A549 (cell line): ENCODE measurements at regions of chr14 and their contacts with region 1.

Region 1: DNA sequence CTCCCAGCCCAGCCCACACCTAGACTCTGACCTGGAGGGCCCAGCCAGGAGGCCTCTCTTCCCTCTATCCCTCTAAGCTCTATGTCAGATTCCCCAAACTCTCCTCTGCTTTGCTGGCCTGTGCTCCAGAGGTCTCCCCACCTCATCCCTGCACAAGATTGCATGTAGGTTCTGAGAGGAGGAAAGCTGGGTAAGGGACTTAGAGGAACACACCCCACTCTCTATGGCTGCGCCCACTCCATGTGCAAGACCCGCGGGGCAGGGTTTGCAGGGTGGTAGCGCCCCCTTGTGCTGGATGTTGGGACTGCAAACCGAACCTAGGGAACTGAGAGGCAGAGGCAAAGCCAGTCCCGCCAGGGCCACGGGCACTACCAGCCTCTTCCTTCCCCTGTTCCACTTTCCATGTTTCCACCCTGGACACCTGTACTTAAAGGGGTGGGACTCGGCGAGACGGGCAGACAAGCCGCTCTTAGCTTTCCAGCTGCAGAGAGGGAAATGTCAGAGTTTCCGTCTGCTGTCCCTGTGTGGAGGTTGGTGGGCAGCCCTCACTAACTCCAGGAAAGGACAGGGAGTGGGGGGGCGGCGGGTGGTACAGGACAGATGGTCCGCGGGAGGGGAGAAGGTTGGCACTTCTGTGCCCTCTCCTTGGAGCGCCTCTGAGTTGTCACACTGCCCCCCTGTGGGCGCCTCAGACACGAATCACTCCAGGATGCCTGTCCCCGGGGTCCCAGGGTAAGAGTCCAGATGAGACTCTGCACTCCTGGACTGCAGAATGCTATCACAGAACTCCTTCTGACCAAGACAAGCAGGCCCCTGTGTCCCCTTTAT is 16.8 kb downstream of the MMP14 start:
- DNase-seq: peak; percentile 70 to 82
- ATAC-seq: peak; percentile 91 to 96
- H3K4me3 ChIP-seq: peak overlapping the region; percentile 57
- H3K27ac ChIP-seq: peak overlapping the region; percentile 91 to 98
- H3K4me1 ChIP-seq: peaks cover 4% of the 10 kb centered on the region; the same call in 2 of the 3 replicates
- CTCF ChIP-seq: peak; percentile 92
- EP300 ChIP-seq: no peak
- POLR2A ChIP-seq: no peak
- RAD21 ChIP-seq: peak; percentile 91 to 97

Region 2: GRCh38 chr14:22646570-22647254 is 206.4 kb before region 1 on chr14:
- CTCF ChIA-PET with region 1: interaction called, 30 read pairs
- POLR2A ChIA-PET with region 1: no interaction called
- DNase-seq: peak in 1 of 2 experiments; percentile 27
- ATAC-seq: no peak
- H3K4me3 ChIP-seq: no peak overlapping the region
- H3K27ac ChIP-seq: peak overlapping the region; percentile 79 to 80
- H3K4me1 ChIP-seq: peaks cover 53% of the 10 kb centered on the region
- CTCF ChIP-seq: no peak
- EP300 ChIP-seq: no peak
- POLR2A ChIP-seq: no peak
- RAD21 ChIP-seq: no peak

Region 3: GRCh38 chr14:22748631-22749068 is 104.5 kb before region 1 on chr14:
- CTCF ChIA-PET with region 1: interaction called, 12 read pairs
- POLR2A ChIA-PET with region 1: no interaction called
- DNase-seq: no peak
- ATAC-seq: no peak
- H3K4me3 ChIP-seq: no peak overlapping the region
- H3K27ac ChIP-seq: no peak overlapping the region
- H3K4me1 ChIP-seq: no peaks in the 10 kb centered on the region
- CTCF ChIP-seq: no peak
- EP300 ChIP-seq: no peak
- POLR2A ChIP-seq: no peak
- RAD21 ChIP-seq: no peak

Region 4: GRCh38 chr14:22781586-22781991 is 71.6 kb before region 1 on chr14:
- CTCF ChIA-PET with region 1: interaction called, 71 read pairs
- POLR2A ChIA-PET with region 1: no interaction called
- DNase-seq: no peak
- ATAC-seq: no peak
- H3K4me3 ChIP-seq: no peak overlapping the region
- H3K27ac ChIP-seq: no peak overlapping the region
- H3K4me1 ChIP-seq: peaks cover 10% of the 10 kb centered on the region; the same call in 2 of the 3 replicates
- CTCF ChIP-seq: no peak
- EP300 ChIP-seq: no peak
- POLR2A ChIP-seq: no peak
- RAD21 ChIP-seq: no peak

Region 5: DNA sequence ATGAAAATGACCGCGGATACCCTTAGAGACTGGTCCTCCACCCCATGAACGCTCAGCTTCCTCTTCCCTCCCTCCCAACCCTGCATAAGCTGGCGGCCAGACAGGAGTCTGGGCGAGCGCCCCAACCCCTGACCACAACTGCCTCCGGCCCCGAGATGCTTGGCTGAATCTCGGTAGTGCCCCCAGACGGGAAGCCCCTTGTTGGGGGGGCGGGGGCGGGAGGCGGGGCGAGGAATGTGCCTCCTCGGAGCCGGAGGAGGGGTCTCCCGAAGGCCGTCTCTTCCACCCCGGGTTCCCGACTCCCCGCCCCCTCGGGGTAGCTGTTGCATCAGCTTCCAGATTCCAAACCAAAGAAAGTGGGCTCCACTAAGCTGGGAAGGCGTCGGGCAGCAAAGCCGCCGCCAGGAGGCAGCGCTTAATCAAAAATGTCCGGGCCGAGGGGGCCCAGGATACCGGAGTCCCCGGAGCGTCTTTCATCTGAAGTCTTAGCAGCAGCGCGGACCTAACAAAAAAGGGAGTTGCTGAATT is 30.5 kb before region 1 on chr14:
- CTCF ChIA-PET with region 1: interaction called, 259 read pairs
- POLR2A ChIA-PET with region 1: interaction called, 8 read pairs
- DNase-seq: peak; percentile 83 to 88
- ATAC-seq: peak; percentile 68 to 90
- H3K4me3 ChIP-seq: peak overlapping the region; percentile 33
- H3K27ac ChIP-seq: peak overlapping the region; percentile 82 to 93
- H3K4me1 ChIP-seq: peaks cover 74% of the 10 kb centered on the region
- CTCF ChIP-seq: peak; percentile 85
- EP300 ChIP-seq: no peak
- POLR2A ChIP-seq: no peak
- RAD21 ChIP-seq: peak; percentile 85 to 94

Region 6: GRCh38 chr14:22836301-22837113 is 16.6 kb before region 1 on chr14 and contains the start of gene MMP14:
- CTCF ChIA-PET with region 1: interaction called, 195 read pairs
- POLR2A ChIA-PET with region 1: no interaction called
- DNase-seq: no peak
- ATAC-seq: no peak
- H3K4me3 ChIP-seq: 0 out of 3 replicates have a peak within 1 kb of the TSS, but pooled peaks have one; percentile 18
- H3K27ac ChIP-seq: peak within 1 kb of the TSS in 1 of 2 experiments; percentile 38; a peak in 1 of 6 replicates
- H3K4me1 ChIP-seq: no peaks in the 10 kb centered on the region
- CTCF ChIP-seq: no peak
- EP300 ChIP-seq: no peak
- POLR2A ChIP-seq: no peak
- RAD21 ChIP-seq: no peak
- polyA plus RNA-seq, gene MMP14: 1.9 and 2.5 TPM in 2 replicates

Region 7: DNA sequence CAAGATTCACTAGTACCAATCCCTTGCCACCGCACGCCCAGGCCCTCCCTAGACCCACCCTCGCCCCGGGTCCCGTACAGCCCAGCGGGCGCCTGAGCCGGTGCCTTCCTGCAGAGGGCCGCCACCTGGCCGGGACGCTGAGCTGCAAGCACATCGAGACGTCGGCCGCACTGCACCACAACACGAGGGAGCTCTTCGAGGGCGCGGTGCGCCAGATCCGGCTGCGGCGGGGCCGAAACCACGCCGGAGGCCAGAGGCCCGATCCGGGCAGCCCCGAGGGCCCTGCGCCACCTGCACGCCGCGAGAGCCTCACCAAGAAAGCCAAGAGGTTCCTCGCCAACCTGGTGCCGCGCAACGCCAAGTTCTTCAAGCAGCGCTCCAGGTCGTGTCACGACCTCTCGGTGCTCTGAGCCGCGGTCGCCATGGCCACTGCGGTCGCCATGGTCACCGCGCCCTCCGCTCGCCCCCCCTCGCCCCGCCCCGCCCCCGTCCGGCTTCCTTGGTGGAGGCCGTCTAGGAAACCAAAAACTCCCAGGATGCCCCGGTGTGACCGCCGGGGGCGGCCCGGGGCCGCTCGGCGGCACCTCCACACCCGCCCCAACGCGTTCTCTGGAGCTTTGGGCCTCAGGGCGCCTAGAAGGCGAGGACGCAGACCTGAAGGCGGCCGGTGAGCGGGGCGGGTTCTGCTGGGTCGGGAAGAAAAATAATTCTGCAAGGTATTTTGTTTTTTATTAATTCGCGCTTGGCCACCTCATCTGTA is 33.5 kb after region 1 on chr14:
- CTCF ChIA-PET with region 1: interaction called, 30 read pairs
- POLR2A ChIA-PET with region 1: no interaction called
- DNase-seq: peak; percentile 66 to 73
- ATAC-seq: peak; percentile 78 to 80
- H3K4me3 ChIP-seq: peak overlapping the region; percentile 61
- H3K27ac ChIP-seq: peak overlapping the region; percentile 87 to 93
- H3K4me1 ChIP-seq: peaks cover 18% of the 10 kb centered on the region
- CTCF ChIP-seq: no peak
- EP300 ChIP-seq: no peak
- POLR2A ChIP-seq: peak; percentile 65
- RAD21 ChIP-seq: no peak

Region 8: DNA sequence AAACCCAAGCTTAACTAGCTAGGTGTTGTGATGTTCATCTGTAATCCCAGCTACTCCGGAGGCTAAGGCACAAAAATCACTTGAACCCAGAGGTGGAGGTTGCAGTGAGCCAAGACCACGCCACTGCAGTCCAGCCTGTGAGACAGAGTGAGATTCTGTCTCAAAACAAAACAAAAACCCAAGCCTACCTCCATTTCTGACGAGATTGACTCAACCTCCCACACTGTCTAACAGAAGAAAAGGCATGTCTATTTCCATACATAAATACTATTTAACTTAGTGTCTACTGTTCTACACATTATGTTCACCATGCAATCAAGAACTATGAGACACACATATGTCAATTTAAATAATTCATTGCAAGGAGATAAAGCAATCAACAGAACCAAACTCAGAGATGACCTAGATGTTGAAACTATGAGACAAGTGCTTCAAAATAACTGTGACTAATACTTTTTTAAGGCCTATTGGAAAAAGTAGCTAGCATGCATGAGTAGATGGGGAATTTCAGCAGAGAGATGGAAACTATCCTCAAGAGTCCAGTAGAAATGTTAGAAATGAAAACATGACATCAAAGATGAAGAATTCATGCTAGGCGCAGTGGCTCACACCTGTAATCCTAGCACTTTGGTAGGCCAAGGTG is 1024.5 kb after region 1 on chr14:
- CTCF ChIA-PET with region 1: no interaction called
- POLR2A ChIA-PET with region 1: no interaction called
- DNase-seq: no peak
- ATAC-seq: no peak
- H3K4me3 ChIP-seq: no peak overlapping the region
- H3K27ac ChIP-seq: no peak overlapping the region
- H3K4me1 ChIP-seq: no peaks in the 10 kb centered on the region
- CTCF ChIP-seq: no peak
- EP300 ChIP-seq: no peak
- POLR2A ChIP-seq: no peak
- RAD21 ChIP-seq: no peak